ENCODE measurements at regions of chr2 and their contacts with region 1.

Region 1: DNA sequence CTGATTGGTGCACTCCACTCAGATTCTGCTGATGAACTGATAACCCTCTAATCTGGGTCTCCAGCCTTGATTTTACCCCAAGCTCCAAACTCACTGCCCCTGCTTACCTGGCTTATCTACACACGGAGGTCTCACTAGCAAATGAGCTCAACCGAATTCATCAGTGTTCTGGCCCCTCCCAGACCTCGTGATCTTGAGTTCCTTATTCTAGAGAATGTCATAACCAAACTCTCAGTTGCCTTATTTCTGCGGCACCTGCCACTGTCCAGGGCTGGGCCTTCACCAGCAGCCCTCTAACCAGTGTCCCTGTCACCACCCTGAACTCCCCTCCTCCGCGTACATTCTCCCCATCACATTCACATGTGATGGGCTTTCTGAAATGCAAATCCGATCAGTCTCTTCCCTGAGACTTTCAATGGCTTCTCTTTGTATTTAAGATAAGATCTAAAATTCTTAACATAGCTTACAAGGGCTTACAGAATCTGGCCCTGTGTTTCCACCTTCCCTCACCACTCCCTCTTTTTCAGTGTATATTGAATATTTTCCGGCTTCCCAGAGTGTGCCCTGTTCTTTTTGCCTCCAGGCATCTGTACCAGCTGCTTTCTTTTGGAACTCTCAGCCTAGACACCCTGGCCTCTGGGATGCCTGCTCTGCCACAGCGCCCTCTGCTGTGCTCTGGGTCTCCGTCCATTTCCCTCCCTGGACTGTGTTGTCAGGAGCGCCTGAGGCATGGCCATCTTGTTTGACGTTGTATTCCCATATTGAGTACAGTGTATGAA is 31.1 kb downstream of the NAB1 start:
- DNase-seq: peak; percentile 86
- H3K4me3 Mint-ChIP-seq: peak overlapping the region; percentile 49
- H3K27ac Mint-ChIP-seq: peak overlapping the region; percentile 91
- H3K4me1 Mint-ChIP-seq: peaks cover 48% of the 10 kb centered on the region
- H3K27me3 Mint-ChIP-seq: no peaks in the 10 kb centered on the region

Region 2: DNA sequence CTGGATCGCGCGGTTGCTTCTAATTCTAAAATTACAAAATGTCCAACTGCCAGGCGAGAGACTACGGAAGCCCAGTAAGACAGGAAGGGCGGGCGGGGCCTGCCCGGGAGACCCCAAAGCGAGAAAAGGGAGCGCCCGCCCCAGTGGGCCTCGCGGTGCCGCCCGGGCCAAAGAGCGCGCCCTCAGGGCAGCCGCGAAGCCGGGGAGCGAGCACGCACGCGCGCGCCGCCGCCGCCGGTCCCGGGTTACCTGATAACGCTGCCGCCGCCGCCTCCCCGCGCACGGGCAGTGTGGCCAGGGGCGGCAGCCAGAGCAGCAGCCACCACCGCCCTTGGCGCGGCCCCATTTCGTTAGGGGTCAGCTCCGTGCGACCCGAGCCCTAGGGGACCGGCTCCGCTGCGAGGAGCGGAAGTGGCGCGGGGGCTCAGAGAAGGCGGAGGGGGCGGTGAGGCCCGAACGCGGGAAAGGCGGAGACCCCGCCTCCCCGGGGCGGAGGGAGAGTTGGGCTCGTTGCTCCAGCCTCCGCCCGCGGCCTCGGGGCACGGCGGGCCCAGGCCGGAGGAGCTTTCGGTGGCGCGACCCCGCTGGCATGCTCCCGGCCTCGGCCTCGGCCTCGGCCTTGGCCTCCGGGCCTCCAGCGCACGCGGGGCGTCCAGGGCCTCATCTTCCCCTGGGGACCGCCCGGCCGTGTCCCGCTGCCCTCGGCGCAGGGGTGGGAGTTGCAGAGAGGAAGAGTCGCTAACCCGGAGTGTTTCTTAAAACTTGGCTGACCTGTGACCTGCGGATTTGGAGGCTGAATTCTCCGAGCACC is 145.5 kb before region 1 on chr2 and contains the start of gene NEMP2:
- intact Hi-C with region 1: loop called (anchors 1 kb)
- DNase-seq: peak; percentile 95
- H3K4me3 Mint-ChIP-seq: peak within 1 kb of the TSS; percentile 93
- H3K27ac Mint-ChIP-seq: peak within 1 kb of the TSS; percentile 99
- H3K4me1 Mint-ChIP-seq: peaks cover 41% of the 10 kb centered on the region
- H3K27me3 Mint-ChIP-seq: no peaks in the 10 kb centered on the region
- total RNA-seq, gene NEMP2: 16.4 and 19.0 TPM in 2 replicates

Region 3: DNA sequence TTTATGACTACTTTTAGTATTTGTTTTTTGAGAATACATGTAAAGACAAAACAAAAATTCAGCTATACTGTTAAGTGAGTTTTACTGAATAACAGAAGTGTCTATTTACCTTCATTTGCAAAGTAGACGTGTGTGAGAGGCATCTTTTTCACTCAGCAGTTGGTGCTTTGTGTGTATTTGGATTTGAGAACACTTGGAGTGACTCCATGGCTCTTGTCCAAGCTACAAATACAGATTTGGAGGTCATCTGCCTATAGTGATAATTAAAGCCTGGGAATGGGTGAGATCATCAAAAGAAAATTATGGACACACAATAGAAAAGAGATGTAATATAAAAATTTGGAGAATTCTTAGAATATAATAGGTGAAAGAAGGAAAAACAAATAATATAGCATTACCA is 24.9 kb before region 1 on chr2:
- intact Hi-C with region 1: loop called (anchors 2 kb)
- DNase-seq: no peak
- H3K4me3 Mint-ChIP-seq: no peak overlapping the region
- H3K27ac Mint-ChIP-seq: no peak overlapping the region
- H3K4me1 Mint-ChIP-seq: peaks cover 39% of the 10 kb centered on the region
- H3K27me3 Mint-ChIP-seq: no peaks in the 10 kb centered on the region

Region 4: GRCh38 chr2:190763901-190764514 is 84.0 kb after region 1 on chr2:
- intact Hi-C with region 1: loop called (anchors 1 kb)
- DNase-seq: peak; percentile 63
- H3K4me3 Mint-ChIP-seq: peak overlapping the region; percentile 42
- H3K27ac Mint-ChIP-seq: peak overlapping the region; percentile 29
- H3K4me1 Mint-ChIP-seq: peaks cover 41% of the 10 kb centered on the region
- H3K27me3 Mint-ChIP-seq: no peaks in the 10 kb centered on the region

Region 5: GRCh38 chr2:190843874-190844699 is 164.1 kb after region 1 on chr2:
- intact Hi-C with region 1: loop called (anchors 1 kb)
- DNase-seq: peak; percentile 72
- H3K4me3 Mint-ChIP-seq: peak overlapping the region; percentile 60
- H3K27ac Mint-ChIP-seq: peak overlapping the region; percentile 87
- H3K4me1 Mint-ChIP-seq: peaks cover 25% of the 10 kb centered on the region
- H3K27me3 Mint-ChIP-seq: no peaks in the 10 kb centered on the region